CD8-positive, alpha-beta memory T cell (primary cell): ENCODE measurements at regions of chr2 and their contacts with region 1.

Region 1: GRCh38 chr2:20051532-20052228 is at the start of gene LAPTM4A:
- DNase-seq: peak; percentile 97 to 99 (median 98)
- H3K4me3 ChIP-seq: peak within 1 kb of the TSS; percentile 96
- H3K4me3 Mint-ChIP-seq: no peak within 1 kb of the TSS
- H3K27ac ChIP-seq: peak within 1 kb of the TSS; percentile 100
- H3K27ac Mint-ChIP-seq: no peak within 1 kb of the TSS
- H3K4me1 ChIP-seq: peaks cover 29% of the 10 kb centered on the region
- H3K4me1 Mint-ChIP-seq: peaks cover 27 to 37% (median 33%) of the 10 kb centered on the region in 3 donors
- H3K27me3 ChIP-seq: peaks cover 6% of the 10 kb centered on the region
- H3K27me3 Mint-ChIP-seq: peaks cover 10 to 21% of the 10 kb centered on the region in 2 donors
- total RNA-seq, gene LAPTM4A: 29.0 to 31.0 TPM

Region 2: DNA sequence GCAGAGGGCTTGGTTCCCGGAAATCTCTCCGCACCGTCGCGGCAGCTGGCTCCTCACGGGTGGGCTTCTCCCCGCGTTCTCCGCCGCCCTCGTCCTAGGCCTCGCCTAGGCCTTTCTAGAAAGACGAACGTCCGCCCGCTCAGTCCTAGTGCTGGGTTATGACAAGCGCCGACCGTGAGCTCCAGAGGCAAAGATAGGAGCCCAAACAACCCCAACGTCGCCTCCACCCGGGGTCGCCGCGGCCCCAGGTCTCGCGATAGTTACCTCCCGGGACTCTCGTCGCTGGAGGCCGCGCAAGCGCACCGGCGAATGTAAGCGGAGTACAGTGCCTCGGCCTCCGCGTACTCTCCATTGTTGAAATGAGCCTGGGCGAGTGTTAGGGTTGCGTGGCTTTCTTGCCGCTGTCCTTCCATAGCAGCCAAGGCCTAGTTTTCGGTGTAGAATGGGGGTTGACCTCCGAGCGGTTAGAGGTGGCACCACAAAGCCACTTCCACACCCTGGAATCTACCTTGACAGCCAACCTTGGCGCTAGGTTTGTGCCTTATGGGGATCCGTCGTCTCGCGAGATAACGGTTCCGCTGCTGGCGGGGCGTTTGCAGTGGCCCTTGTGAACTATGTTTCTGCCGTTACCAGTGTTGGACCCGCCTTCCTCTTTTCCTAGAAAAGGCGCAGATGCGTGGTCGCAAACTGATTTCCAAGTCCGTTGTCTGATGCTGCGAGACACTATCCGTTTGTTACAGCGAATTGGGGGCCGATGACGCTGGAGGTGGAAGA is 150.1 kb before region 1 on chr2 and contains the start of gene TTC32:
- CTCF ChIA-PET with region 1: no interaction called
- POLR2A ChIA-PET with region 1: interaction called, 10 read pairs
- DNase-seq: peak; percentile 90 to 97 (median 95)
- H3K4me3 ChIP-seq: peak within 1 kb of the TSS; percentile 97
- H3K4me3 Mint-ChIP-seq: peak within 1 kb of the TSS; percentile 85 to 99 (median 96)
- H3K27ac ChIP-seq: peak within 1 kb of the TSS; percentile 94
- H3K27ac Mint-ChIP-seq: peak within 1 kb of the TSS; percentile 91 to 100 (median 99)
- H3K4me1 ChIP-seq: peaks cover 36% of the 10 kb centered on the region
- H3K4me1 Mint-ChIP-seq: peaks cover 31 to 43% (median 40%) of the 10 kb centered on the region in 3 donors
- H3K27me3 ChIP-seq: no peaks in the 10 kb centered on the region
- H3K27me3 Mint-ChIP-seq: peaks cover 7 to 15% of the 10 kb centered on the region in 2 donors
- total RNA-seq, gene TTC32: 14.1 to 15.7 TPM

Region 3: GRCh38 chr2:20097879-20098714 is 46.4 kb after region 1 on chr2:
- CTCF ChIA-PET with region 1: no interaction called
- POLR2A ChIA-PET with region 1: no interaction called
- DNase-seq: peak; percentile 54 to 82 (median 60)
- H3K4me3 ChIP-seq: no peak overlapping the region
- H3K4me3 Mint-ChIP-seq: no peak overlapping the region
- H3K27ac ChIP-seq: no peak overlapping the region
- H3K27ac Mint-ChIP-seq: peak overlapping the region in 1 of 8 donors; percentile 8
- H3K4me1 ChIP-seq: no peaks in the 10 kb centered on the region
- H3K4me1 Mint-ChIP-seq: no peaks in the 10 kb centered on the region
- H3K27me3 ChIP-seq: no peaks in the 10 kb centered on the region
- H3K27me3 Mint-ChIP-seq: peaks cover 14 to 20% of the 10 kb centered on the region in 2 donors